Mammary epithelial cell (primary cell): ENCODE measurements at regions of chr10 and their contacts with region 1.

Region 1: GRCh38 chr10:72223743-72224101 is 7.6 kb upstream of the ASCC1 start:
- DNase-seq: no peak
- H3K4me3 ChIP-seq: no peak overlapping the region
- H3K27ac ChIP-seq: no peak overlapping the region
- H3K4me1 ChIP-seq: peaks cover 5% of the 10 kb centered on the region
- H3K27me3 ChIP-seq: no peaks in the 10 kb centered on the region
- CTCF ChIP-seq: no peak

Region 2: DNA sequence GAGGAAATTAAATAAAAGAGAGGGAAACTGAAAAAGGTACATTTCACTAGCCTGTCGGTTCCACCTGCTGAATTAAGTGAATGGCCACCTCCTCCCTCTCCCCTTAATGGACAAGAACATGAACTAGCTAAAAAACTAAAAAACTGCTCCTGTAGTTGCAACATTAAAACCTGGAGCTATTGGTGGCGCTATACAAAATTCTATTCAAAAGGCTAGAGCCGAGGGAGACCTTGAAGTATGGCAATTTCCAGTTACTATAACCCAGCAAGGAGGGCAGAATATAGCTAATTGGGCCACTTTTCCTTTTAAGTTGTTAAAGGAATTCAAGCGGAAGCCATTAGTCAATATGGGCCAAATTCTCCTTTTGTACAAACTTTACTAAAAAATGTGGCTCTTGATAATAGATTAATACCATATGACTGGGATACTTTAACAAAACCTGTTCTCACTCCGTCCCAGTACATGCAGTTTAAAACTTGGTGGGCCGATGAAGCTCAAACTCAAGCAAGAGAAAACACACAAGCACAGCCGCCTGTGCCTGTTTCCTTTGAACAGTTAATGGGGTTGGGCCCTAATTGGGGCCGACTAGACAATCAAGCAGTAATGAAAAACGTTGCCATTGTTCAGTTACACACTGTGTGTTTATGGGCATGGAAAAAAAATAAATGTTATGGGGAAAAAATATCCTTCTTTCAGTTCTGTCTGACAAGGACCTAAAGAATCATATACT is 266.0 kb before region 1 on chr10:
- CTCF ChIA-PET with region 1: no interaction called
- dilution Hi-C with region 1: no loop called
- in situ Hi-C with region 1: no loop called
- intact Hi-C with region 1: loop called (anchors 5 kb)
- DNase-seq: no peak
- H3K4me3 ChIP-seq: no peak overlapping the region
- H3K27ac ChIP-seq: no peak overlapping the region
- H3K4me1 ChIP-seq: peaks cover 13% of the 10 kb centered on the region
- H3K27me3 ChIP-seq: no peaks in the 10 kb centered on the region
- CTCF ChIP-seq: no peak

Region 3: GRCh38 chr10:72126184-72126871 is 97.4 kb before region 1 on chr10:
- CTCF ChIA-PET with region 1: no interaction called
- dilution Hi-C with region 1: no loop called
- in situ Hi-C with region 1: no loop called
- intact Hi-C with region 1: loop called (anchors 1 kb)
- DNase-seq: peak; percentile 25
- H3K4me3 ChIP-seq: no peak overlapping the region
- H3K27ac ChIP-seq: no peak overlapping the region
- H3K4me1 ChIP-seq: no peaks in the 10 kb centered on the region
- H3K27me3 ChIP-seq: no peaks in the 10 kb centered on the region
- CTCF ChIP-seq: peak; percentile 36 to 51